Naive thymus-derived CD4-positive, alpha-beta T cell (primary cell): ENCODE measurements at regions of chr17 and their contacts with region 1.

Region 1: GRCh38 chr17:40608061-40608588 is 39.5 kb downstream of the SMARCE1 start:
- DNase-seq: peak in 8 of 9 donors; percentile 39 to 90 (median 85)
- ATAC-seq: peak; percentile 80
- H3K4me3 ChIP-seq: peak overlapping the region; percentile 62
- H3K4me3 Mint-ChIP-seq: peak overlapping the region; percentile 64 to 88 (median 78)
- H3K27ac ChIP-seq: peak overlapping the region; percentile 94
- H3K27ac Mint-ChIP-seq: peak overlapping the region; percentile 90 to 100 (median 99)
- H3K4me1 ChIP-seq: peaks cover 83 to 98% of the 10 kb centered on the region in 2 donors
- H3K4me1 Mint-ChIP-seq: peaks cover 43 to 100% (median 94%) of the 10 kb centered on the region in 7 donors
- H3K27me3 ChIP-seq: no peaks in the 10 kb centered on the region
- H3K27me3 Mint-ChIP-seq: no peaks in the 10 kb centered on the region

Region 2: DNA sequence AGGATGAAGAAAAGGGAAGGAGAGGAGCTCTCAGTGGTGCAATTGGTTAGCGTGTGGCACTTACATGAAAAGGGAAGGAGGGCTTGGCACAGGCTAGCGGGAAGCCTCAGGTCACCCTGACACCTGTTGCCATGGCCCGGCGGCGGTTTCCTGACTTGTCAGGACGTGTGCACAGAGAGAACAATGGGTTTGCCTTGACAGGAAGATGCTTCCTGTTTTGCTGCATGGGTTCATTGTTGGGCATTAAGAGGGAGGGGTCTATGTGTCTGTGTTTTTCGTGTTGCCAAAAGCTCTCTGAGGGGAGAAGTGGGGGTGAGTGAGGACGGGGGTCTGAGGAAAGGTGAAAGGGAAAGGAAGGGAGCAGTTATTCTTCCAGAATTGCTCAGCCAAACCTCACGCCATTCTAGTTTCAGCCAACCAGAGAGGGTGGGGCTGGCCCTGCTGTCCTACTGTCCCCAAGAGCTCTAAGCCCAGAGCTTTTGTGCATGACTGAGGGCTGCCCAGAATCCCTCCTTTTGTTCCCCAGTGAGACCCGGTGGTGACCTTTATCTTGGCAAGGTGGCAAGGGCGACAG is 25.7 kb before region 1 on chr17:
- CTCF ChIA-PET with region 1: interaction called, 30 read pairs
- POLR2A ChIA-PET with region 1: interaction called, 171 read pairs
- intact Hi-C with region 1: loop called in 1 of 2 experiments (anchors 1 kb)
- DNase-seq: peak in 7 of 9 donors; percentile 75 to 90 (median 86)
- ATAC-seq: peak; percentile 91
- H3K4me3 ChIP-seq: peak overlapping the region; percentile 46
- H3K4me3 Mint-ChIP-seq: peak overlapping the region; percentile 73 to 88 (median 77)
- H3K27ac ChIP-seq: peak overlapping the region; percentile 84
- H3K27ac Mint-ChIP-seq: peak overlapping the region; percentile 91 to 99 (median 96)
- H3K4me1 ChIP-seq: peaks cover 27 to 76% of the 10 kb centered on the region in 2 donors
- H3K4me1 Mint-ChIP-seq: peaks cover 63 to 100% (median 97%) of the 10 kb centered on the region in 7 donors
- H3K27me3 ChIP-seq: no peaks in the 10 kb centered on the region
- H3K27me3 Mint-ChIP-seq: no peaks in the 10 kb centered on the region